GM13977 (cell line): ENCODE measurements at regions of chr13 and their contacts with region 1.

Region 1: GRCh38 chr13:111228262-111229144 is 91.9 kb upstream of the TEX29 start:
- DNase-seq: no peak
- CTCF ChIP-seq: no peak

Region 2: DNA sequence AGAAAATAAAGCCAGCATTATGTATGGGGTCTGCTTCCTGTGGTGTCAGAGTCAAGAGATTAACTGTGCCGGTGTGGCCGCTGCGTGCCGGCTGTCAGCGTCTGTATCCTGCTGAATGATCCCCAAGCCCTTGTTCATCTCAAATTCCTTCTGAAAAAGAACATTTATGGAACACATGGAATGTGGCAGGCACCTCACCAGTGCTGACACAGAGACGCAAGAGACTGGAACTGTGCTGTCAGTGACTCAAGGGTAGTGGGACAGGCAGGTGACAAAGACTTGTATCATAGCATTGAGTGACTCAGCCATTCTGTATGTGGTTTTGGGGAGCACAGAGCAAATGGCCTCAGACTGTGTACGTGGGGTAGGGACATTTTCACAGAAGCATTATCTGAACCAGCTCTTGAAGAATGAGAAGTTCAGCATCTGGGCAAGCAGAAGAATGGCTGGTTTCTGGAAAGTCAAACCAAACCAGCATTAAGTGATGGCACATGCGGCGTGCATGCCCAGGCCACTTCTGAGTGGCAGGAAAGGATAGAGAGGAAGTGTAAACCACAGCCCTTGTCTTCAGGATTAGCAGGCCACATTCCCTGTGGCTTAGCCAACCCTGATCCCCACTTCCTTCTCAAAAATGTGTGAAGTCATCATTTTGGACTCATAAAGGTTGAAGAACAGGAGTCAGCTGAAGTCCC is 1388.2 kb before region 1 on chr13:
- in situ Hi-C with region 1: no loop called
- DNase-seq: no peak
- CTCF ChIP-seq: no peak

Region 3: GRCh38 chr13:111049802-111050538 is 178.5 kb before region 1 on chr13:
- in situ Hi-C with region 1: loop called (anchors 25 kb)
- DNase-seq: no peak
- CTCF ChIP-seq: peak; percentile 62

Region 4: DNA sequence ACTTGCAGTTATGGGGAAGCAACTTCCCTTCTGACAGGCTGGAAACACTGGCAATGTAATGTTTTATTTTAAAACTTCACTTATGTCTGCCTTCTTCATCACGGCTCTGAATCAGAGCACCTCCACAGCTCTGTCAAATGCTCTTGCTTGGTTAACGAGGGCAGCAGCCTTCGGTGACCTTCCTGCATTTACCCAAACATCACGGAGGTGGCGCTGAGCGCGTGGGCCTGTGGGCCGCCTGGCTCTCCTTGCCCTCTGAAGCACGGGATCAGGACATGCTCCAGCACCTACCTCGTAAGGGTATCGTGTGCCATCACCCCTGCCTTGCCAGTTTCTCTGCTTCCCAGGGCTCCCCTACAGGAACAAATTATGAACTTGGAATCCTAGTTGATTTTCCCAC is 401.9 kb after region 1 on chr13:
- in situ Hi-C with region 1: no loop called
- DNase-seq: no peak
- CTCF ChIP-seq: no peak